ENCODE measurements at regions of chr3 and their contacts with region 1.

Region 1: GRCh38 chr3:23183734-23184133 is 19.4 kb upstream of the UBE2E2 start:
- DNase-seq: no peak
- H3K4me3 ChIP-seq: no peak overlapping the region
- H3K27ac ChIP-seq: no peak overlapping the region
- H3K4me1 ChIP-seq: peaks cover 1% of the 10 kb centered on the region
- H3K27me3 ChIP-seq: no peaks in the 10 kb centered on the region
- CTCF ChIP-seq: peak; percentile 60

Region 2: GRCh38 chr3:23129817-23130216 is 53.9 kb before region 1 on chr3:
- intact Hi-C with region 1: loop called (anchors 10 kb)
- DNase-seq: no peak
- H3K4me3 ChIP-seq: no peak overlapping the region
- H3K27ac ChIP-seq: no peak overlapping the region
- H3K4me1 ChIP-seq: peaks cover 15% of the 10 kb centered on the region
- H3K27me3 ChIP-seq: no peaks in the 10 kb centered on the region
- CTCF ChIP-seq: no peak